CD14-positive monocyte (primary cell): ENCODE measurements at regions of chr5 and their contacts with region 1.

Region 1: DNA sequence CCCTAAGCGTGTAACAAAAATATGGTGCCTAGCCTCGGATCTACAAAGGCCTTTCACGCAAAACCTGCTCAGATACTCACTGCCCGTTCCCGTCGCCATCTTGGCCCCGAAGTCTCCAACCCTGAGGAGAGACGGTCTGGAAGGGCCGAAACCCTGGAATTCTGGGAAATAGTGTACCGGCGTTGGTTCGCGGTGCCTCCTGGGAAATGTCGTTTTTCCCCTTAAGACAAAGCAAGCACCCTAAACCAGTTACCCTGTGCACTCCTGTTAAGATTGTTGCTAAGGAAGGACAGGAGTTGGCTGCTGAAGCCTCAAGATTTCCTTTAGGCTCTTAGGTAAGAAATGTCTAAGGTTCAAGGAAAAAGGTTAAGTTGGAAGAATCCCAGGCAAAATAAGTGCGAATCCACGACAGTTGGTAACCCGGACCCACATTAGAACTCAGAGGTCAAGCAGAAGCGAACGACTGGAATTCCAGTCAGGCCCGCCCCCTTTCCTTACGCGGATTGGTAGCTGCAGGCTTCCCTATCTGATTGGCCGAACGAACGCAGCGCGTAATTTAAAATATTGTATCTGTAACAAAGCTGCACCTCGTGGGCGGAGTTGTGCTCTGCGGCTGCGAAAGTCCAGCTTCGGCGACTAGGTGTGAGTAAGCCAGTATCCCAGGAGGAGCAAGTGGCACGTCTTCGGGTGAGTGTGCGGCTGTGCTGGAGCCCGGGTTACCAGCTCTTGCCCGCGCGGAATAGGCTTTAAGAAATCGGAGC is at the starts of genes BRD8 and KIF20A:
- DNase-seq: peak; percentile 86 to 95 (median 89)
- H3K4me3 ChIP-seq: peak within 1 kb of the TSS; percentile 73 to 94 (median 79)
- H3K4me3 Mint-ChIP-seq: peak within 1 kb of the TSS in 1 of 2 donors; percentile 16
- H3K27ac ChIP-seq: peak within 1 kb of the TSS; percentile 15 to 63
- H3K27ac Mint-ChIP-seq: peak within 1 kb of the TSS in 3 of 7 donors; percentile 1 to 75 (median 68)
- H3K4me1 ChIP-seq: peaks cover 25 to 31% of the 10 kb centered on the region in 2 donors
- H3K4me1 Mint-ChIP-seq: peaks cover 1% of the 10 kb centered on the region
- H3K27me3 ChIP-seq: no peaks in the 10 kb centered on the region
- H3K27me3 Mint-ChIP-seq: no peaks in the 10 kb centered on the region
- CTCF ChIP-seq: no peak
- polyA plus RNA-seq, gene BRD8: 9.8 to 19.6 (median 17.6) TPM
- polyA plus RNA-seq, gene KIF20A: not detected

Region 2: DNA sequence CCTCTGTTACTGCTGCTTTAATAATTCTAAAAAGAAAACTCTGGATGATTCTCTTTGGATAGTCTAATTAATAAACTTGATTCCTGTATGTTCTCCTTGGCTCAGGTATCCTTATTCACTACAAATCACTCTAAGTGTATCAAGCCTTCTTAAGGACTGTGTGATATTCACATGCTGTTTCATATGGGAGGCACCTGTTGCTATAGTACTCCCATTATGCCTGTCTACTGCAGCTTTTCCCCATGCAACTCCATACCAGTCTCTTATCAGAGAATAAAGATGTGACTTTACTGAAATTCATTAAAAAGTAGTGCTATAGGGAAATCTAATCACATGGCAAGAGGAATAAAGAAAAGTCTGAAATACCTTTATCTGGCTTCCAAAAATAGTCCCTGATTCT is 15.0 kb before region 1 on chr5:
- intact Hi-C with region 1: no loop called
- DNase-seq: no peak
- H3K4me3 ChIP-seq: no peak overlapping the region
- H3K4me3 Mint-ChIP-seq: no peak overlapping the region
- H3K27ac ChIP-seq: no peak overlapping the region
- H3K27ac Mint-ChIP-seq: peak overlapping the region in 1 of 7 donors; percentile 79
- H3K4me1 ChIP-seq: no peaks in the 10 kb centered on the region
- H3K4me1 Mint-ChIP-seq: no peaks in the 10 kb centered on the region
- H3K27me3 ChIP-seq: no peaks in the 10 kb centered on the region
- H3K27me3 Mint-ChIP-seq: no peaks in the 10 kb centered on the region
- CTCF ChIP-seq: no peak

Region 3: DNA sequence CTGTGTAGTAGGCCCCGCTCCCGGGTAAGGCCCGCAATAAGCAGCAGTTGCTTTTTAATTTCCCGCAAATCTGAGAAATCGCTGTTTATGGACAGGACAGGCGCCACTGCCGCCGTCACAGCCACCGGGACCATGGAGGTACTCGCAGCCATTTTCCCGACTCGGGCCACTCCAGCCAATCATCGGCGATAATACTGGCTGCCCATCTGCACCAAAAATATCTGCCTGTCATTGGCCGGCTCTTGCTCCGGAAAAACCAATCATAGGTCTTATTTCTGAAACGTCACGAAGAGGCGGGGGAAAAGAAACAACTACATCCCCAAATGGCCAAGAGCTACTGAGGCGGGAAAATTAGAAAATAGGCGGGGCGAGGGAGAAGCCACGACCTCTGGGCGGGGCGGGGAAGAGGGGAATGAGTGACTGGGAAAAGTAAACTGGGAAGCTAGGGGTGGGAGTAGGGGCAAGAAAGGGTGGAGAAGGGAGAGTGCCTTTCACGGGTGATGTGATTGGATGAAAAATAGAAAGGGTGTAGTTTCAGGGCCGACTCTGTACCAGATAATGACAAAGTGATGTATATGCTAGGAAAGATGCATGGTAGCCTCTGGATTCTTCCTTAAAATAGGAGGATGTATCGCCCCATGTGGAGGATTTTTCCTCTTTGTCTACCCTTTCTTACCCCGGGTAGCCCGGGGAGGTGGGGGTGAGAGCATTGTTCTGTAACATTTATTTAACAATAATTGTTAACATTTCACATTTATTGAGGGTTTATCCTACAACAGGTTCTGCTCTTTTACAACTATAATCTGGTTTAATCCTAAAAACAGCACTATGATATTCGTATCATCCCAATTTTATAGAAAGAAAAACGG is 34.7 kb after region 1 on chr5 and contains the start of gene CDC23:
- intact Hi-C with region 1: loop called in 1 of 2 experiments (anchors 5 kb)
- DNase-seq: peak; percentile 93 to 95 (median 94)
- H3K4me3 ChIP-seq: peak within 1 kb of the TSS; percentile 58 to 99 (median 94)
- H3K4me3 Mint-ChIP-seq: peak within 1 kb of the TSS; percentile 98 to 100
- H3K27ac ChIP-seq: peak within 1 kb of the TSS; percentile 58 to 95
- H3K27ac Mint-ChIP-seq: peak within 1 kb of the TSS; percentile 92 to 99 (median 97)
- H3K4me1 ChIP-seq: peaks cover 14 to 19% of the 10 kb centered on the region in 2 donors
- H3K4me1 Mint-ChIP-seq: peaks cover 14% of the 10 kb centered on the region
- H3K27me3 ChIP-seq: no peaks in the 10 kb centered on the region
- H3K27me3 Mint-ChIP-seq: peaks cover 0 to 3% (median 2%) of the 10 kb centered on the region in 3 donors
- CTCF ChIP-seq: no peak
- polyA plus RNA-seq, gene CDC23: 7.8 to 15.9 (median 12.8) TPM

Region 4: GRCh38 chr5:138337685-138338410 is 159.2 kb after region 1 on chr5 and contains the start of gene FAM53C:
- intact Hi-C with region 1: loop called in 1 of 2 experiments (anchors 5 kb)
- DNase-seq: peak; percentile 86 to 93 (median 92)
- H3K4me3 ChIP-seq: peak within 1 kb of the TSS; percentile 73 to 90 (median 87)
- H3K4me3 Mint-ChIP-seq: peak within 1 kb of the TSS; percentile 81 to 94
- H3K27ac ChIP-seq: peak within 1 kb of the TSS; percentile 93 to 98
- H3K27ac Mint-ChIP-seq: peak within 1 kb of the TSS; percentile 98 to 100 (median 100)
- H3K4me1 ChIP-seq: peaks cover 26 to 33% of the 10 kb centered on the region in 2 donors
- H3K4me1 Mint-ChIP-seq: peaks cover 36% of the 10 kb centered on the region
- H3K27me3 ChIP-seq: no peaks in the 10 kb centered on the region
- H3K27me3 Mint-ChIP-seq: no peaks in the 10 kb centered on the region
- CTCF ChIP-seq: no peak
- polyA plus RNA-seq, gene FAM53C: 24.9 to 92.2 (median 28.7) TPM

Region 5: DNA sequence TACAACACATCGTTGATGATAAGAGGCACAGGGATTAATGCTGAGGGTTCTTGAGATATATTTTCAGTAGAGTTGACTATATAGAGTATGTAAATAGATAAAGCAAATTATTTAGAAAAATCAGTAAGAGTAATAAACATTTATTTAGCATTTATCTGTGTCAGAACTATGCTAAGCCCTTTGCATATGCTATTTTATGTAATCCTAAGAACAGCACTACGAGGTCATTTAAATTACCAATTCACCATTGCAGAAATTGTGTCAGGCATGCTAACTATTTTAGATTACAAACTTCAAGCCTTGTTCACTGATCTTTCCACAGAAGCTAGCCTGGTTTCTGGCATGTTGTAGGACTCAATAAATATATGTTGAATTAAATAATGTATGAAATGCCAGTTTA is 239.7 kb after region 1 on chr5:
- intact Hi-C with region 1: loop called in 1 of 2 experiments (anchors 10 kb)
- DNase-seq: no peak
- H3K4me3 ChIP-seq: no peak overlapping the region
- H3K4me3 Mint-ChIP-seq: no peak overlapping the region
- H3K27ac ChIP-seq: no peak overlapping the region
- H3K27ac Mint-ChIP-seq: no peak overlapping the region
- H3K4me1 ChIP-seq: no peaks in the 10 kb centered on the region
- H3K4me1 Mint-ChIP-seq: no peaks in the 10 kb centered on the region
- H3K27me3 ChIP-seq: no peaks in the 10 kb centered on the region
- H3K27me3 Mint-ChIP-seq: no peaks in the 10 kb centered on the region
- CTCF ChIP-seq: no peak

Region 6: DNA sequence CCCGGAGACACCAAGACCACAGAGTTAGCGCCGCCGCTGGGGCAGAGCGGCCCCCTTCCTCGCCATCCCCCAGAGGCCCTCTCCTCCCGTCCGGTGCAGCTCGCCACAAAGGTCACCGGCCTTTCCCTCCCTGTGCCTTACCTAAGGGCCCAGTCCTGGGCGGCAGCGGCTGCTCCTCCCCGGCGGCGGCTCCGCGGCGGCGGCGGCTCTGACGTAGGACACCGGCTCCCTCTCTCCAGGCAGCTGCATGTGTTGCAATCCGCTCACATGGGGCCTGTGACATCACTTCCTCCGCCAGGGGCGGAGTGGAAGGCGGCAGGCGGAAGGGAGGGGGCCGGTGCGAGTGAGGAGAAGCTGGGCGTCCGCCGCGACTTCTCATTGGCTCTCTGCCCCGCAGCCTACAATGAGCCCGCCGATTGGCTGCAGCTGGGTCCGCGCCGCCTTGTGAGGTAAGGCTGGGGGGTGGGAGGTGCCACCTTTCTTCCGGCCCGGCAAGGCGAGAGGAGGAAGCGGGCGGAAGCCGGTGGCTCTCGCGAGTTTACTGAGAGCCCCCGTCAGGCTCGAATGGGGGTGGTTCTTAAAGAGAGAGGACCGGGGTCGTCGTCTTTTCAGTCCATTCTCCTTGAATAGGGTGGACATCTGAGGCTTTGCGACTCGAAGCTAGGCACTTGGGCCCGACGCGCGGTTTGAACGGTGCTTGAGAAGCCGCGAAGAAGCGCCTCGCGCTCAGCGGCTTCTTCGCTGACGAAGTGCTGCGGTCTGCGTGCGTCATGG is 364.4 kb after region 1 on chr5 and contains the start of gene ETF1:
- intact Hi-C with region 1: loop called in 1 of 2 experiments (anchors 10 kb)
- DNase-seq: peak; percentile 100
- H3K4me3 ChIP-seq: peak within 1 kb of the TSS; percentile 82 to 99 (median 98)
- H3K4me3 Mint-ChIP-seq: peak within 1 kb of the TSS; percentile 98 to 100
- H3K27ac ChIP-seq: peak within 1 kb of the TSS; percentile 96 to 100
- H3K27ac Mint-ChIP-seq: peak within 1 kb of the TSS; percentile 99 to 100 (median 100)
- H3K4me1 ChIP-seq: peaks cover 49 to 55% of the 10 kb centered on the region in 2 donors
- H3K4me1 Mint-ChIP-seq: peaks cover 61% of the 10 kb centered on the region
- H3K27me3 ChIP-seq: no peaks in the 10 kb centered on the region
- H3K27me3 Mint-ChIP-seq: no peaks in the 10 kb centered on the region
- CTCF ChIP-seq: no peak
- polyA plus RNA-seq, gene ETF1: 34.8 to 71.4 (median 61.6) TPM